GM12878 (cell line): ENCODE measurements at regions of chr13 and their contacts with region 1.

Region 1: DNA sequence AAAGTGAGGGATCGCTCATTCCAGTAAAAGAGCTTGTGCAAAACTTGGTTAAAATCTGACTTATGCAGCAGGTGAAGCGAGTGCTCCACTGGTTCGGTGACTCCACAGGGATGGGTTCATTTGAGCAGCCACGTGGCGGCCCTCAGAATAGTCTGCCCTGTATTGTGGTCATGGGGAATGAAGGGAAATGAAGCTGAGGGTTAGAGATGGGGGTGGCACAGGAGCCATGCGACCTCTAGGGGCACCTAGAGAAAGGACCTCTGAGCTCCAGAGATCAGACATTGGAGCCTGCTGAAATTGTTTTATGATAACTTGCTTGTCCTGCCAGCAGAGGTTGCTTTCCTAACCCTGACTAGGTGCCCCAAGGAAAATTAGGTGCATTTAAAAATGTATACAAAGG is 26.6 kb downstream of the CBY2 start:
- DNase-seq: no peak
- ATAC-seq: peak; percentile 99
- H3K4me3 ChIP-seq: no peak overlapping the region
- H3K27ac ChIP-seq: no peak overlapping the region
- H3K4me1 ChIP-seq: no peaks in the 10 kb centered on the region
- H3K27me3 ChIP-seq: no peaks in the 10 kb centered on the region
- CTCF ChIP-seq: peak; percentile 58 to 62 (median 61)
- EP300 ChIP-seq: no peak
- POLR2A ChIP-seq: no peak
- RAD21 ChIP-seq: peak; percentile 70

Region 2: DNA sequence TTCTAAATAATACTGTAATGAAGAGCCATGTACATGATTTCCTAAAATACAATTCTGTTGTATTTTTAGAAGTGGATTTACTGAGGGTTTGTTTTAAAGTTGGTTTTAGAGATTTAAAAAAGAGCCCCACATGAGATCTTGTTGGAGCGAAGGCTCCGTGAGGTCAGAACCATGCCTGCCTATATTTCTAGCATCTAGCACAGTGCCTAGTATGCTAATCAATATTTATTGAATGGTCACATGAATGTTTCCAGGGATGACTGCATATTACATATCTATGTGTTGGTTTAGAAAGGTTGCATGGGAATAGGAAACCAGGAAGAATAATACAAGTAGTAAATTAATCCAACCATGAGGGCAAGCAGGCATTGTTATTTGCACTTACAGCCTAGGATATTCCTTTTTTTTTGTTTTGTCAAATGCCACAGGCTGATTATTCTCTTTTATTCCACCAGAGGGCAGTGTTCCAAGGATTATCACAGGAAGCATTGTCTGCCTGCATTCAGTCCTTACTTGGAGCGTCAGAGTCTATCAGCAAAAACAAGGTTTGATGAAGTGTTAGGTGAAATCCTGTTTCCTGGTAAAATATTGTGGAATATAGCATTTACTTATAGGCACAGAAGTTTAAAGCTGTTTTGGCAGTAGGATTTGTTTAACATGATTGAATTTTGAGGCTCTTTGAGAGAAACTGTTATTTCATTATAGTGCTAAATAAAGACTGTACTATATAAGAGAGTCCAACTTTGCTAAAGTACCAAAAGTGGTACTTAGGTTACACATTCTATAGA is 217.3 kb before region 1 on chr13:
- CTCF ChIA-PET with region 1: interaction called, 11 read pairs
- POLR2A ChIA-PET with region 1: no interaction called
- RAD21 ChIA-PET with region 1: no interaction called
- SMC1A ChIA-PET with region 1: no interaction called
- in situ Hi-C with region 1: loop called (anchors 5 kb)
- intact Hi-C with region 1: loop called (anchors 2 kb)
- DNase-seq: peak; percentile 24
- ATAC-seq: peak; percentile 85
- H3K4me3 ChIP-seq: no peak overlapping the region
- H3K27ac ChIP-seq: no peak overlapping the region
- H3K4me1 ChIP-seq: no peaks in the 10 kb centered on the region
- H3K27me3 ChIP-seq: no peaks in the 10 kb centered on the region
- CTCF ChIP-seq: peak; percentile 60 to 84 (median 67)
- EP300 ChIP-seq: no peak
- POLR2A ChIP-seq: no peak
- RAD21 ChIP-seq: peak; percentile 58

Region 3: DNA sequence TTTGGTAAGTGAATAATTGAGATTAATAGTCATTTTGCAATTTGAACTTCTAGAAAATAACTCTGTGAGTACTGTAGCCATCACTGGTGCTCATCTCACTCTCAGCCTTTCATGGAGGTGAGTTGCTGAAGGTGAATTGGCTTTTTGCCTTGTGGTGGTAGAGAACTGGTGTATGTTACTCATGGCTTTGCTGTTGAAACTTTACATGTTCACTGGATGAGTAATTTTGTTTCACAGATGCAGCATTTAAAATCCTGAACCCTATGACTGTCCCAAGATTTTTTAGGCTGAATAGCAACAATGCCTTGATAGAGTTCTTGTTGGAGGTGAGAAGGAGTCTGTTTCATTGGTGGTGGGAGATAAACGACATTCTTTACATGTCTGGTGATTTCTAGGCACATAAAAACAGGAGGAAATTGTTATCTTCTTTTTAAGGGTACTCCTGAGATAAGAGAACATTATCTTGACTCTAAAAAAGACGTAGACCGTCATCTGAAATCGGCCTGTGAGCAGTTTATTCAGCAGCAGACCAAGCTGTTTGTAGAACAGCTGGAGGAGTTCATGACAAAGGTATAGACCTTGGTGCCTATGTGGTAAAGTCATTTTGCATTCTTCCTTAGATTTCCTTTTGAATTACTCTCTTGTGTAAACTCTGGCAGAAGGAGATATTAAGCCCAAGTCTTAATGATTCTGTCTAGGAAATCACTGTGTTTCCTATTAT is 210.1 kb before region 1 on chr13:
- CTCF ChIA-PET with region 1: interaction called, 9 read pairs
- POLR2A ChIA-PET with region 1: no interaction called
- RAD21 ChIA-PET with region 1: no interaction called
- SMC1A ChIA-PET with region 1: no interaction called
- in situ Hi-C with region 1: loop called (anchors 5 kb)
- intact Hi-C with region 1: no loop called
- DNase-seq: no peak
- ATAC-seq: no peak
- H3K4me3 ChIP-seq: no peak overlapping the region
- H3K27ac ChIP-seq: no peak overlapping the region
- H3K4me1 ChIP-seq: no peaks in the 10 kb centered on the region
- H3K27me3 ChIP-seq: no peaks in the 10 kb centered on the region
- CTCF ChIP-seq: no peak
- EP300 ChIP-seq: no peak
- POLR2A ChIP-seq: no peak
- RAD21 ChIP-seq: no peak

Region 4: DNA sequence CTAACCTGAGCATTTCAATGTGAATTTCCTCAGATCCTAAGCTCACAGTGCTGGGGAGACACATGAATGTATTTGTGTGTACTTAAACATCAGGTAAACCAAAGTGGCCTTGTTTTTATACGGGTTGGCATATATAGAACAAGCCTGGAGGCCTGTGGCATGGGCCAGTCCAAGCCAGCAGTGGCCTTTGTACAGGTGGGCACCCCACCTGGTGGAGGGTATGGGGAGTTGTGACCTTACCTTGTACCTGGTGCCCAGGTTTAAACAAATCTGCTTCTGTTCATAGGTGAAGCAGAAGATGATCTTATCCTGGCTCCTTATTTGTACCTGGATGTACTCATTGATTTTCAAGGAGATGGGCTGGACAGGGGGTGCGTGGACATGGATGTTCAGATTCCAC is 184.2 kb before region 1 on chr13:
- CTCF ChIA-PET with region 1: no interaction called
- POLR2A ChIA-PET with region 1: no interaction called
- RAD21 ChIA-PET with region 1: no interaction called
- SMC1A ChIA-PET with region 1: no interaction called
- in situ Hi-C with region 1: loop called (anchors 10 kb)
- intact Hi-C with region 1: no loop called
- DNase-seq: no peak
- ATAC-seq: 0 out of 3 replicates have a peak, but pooled peaks have one; percentile 37
- H3K4me3 ChIP-seq: no peak overlapping the region
- H3K27ac ChIP-seq: no peak overlapping the region
- H3K4me1 ChIP-seq: no peaks in the 10 kb centered on the region
- H3K27me3 ChIP-seq: no peaks in the 10 kb centered on the region
- CTCF ChIP-seq: no peak
- EP300 ChIP-seq: no peak
- POLR2A ChIP-seq: no peak
- RAD21 ChIP-seq: no peak